ENCODE measurements at regions of chr20 and their contacts with region 1.

Region 1: GRCh38 chr20:41136680-41137613 is at the start of gene PLCG1:
- DNase-seq: peak; percentile 61 to 90 (median 83)
- ATAC-seq: peak; percentile 70
- H3K4me3 ChIP-seq: peak within 1 kb of the TSS; percentile 72 to 81
- H3K4me3 Mint-ChIP-seq: peak within 1 kb of the TSS; percentile 92
- H3K27ac ChIP-seq: peak within 1 kb of the TSS; percentile 60 to 89
- H3K27ac Mint-ChIP-seq: peak within 1 kb of the TSS; percentile 93
- H3K4me1 ChIP-seq: peaks cover 58% of the 10 kb centered on the region
- H3K4me1 Mint-ChIP-seq: peaks cover 63% of the 10 kb centered on the region
- H3K27me3 ChIP-seq: no peaks in the 10 kb centered on the region
- H3K27me3 Mint-ChIP-seq: no peaks in the 10 kb centered on the region
- CTCF ChIP-seq: no peak
- total RNA-seq, gene PLCG1: 335 to 366 TPM

Region 2: GRCh38 chr20:40990542-40991120 is 146.3 kb before region 1 on chr20:
- CTCF ChIA-PET with region 1: interaction called, 11 read pairs
- POLR2A ChIA-PET with region 1: no interaction called
- intact Hi-C with region 1: no loop called
- DNase-seq: peak; percentile 35 to 77 (median 65)
- ATAC-seq: peak; percentile 81
- H3K4me3 ChIP-seq: no peak overlapping the region
- H3K4me3 Mint-ChIP-seq: no peak overlapping the region
- H3K27ac ChIP-seq: no peak overlapping the region
- H3K27ac Mint-ChIP-seq: no peak overlapping the region
- H3K4me1 ChIP-seq: peaks cover 30% of the 10 kb centered on the region
- H3K4me1 Mint-ChIP-seq: peaks cover 36% of the 10 kb centered on the region
- H3K27me3 ChIP-seq: no peaks in the 10 kb centered on the region
- H3K27me3 Mint-ChIP-seq: no peaks in the 10 kb centered on the region
- CTCF ChIP-seq: peak; percentile 74

Region 3: GRCh38 chr20:41149679-41150131 is 12.8 kb after region 1 on chr20:
- CTCF ChIA-PET with region 1: interaction called, 165 read pairs
- POLR2A ChIA-PET with region 1: interaction called, 317 read pairs
- intact Hi-C with region 1: loop called in 1 of 2 experiments (anchors 1 kb)
- DNase-seq: no peak
- ATAC-seq: no peak
- H3K4me3 ChIP-seq: no peak overlapping the region
- H3K4me3 Mint-ChIP-seq: peak overlapping the region; percentile 29
- H3K27ac ChIP-seq: peak overlapping the region in 1 of 2 experiments; percentile 82
- H3K27ac Mint-ChIP-seq: peak overlapping the region; percentile 98
- H3K4me1 ChIP-seq: peaks cover 100% of the 10 kb centered on the region
- H3K4me1 Mint-ChIP-seq: peaks cover 97% of the 10 kb centered on the region
- H3K27me3 ChIP-seq: no peaks in the 10 kb centered on the region
- H3K27me3 Mint-ChIP-seq: no peaks in the 10 kb centered on the region
- CTCF ChIP-seq: no peak

Region 4: DNA sequence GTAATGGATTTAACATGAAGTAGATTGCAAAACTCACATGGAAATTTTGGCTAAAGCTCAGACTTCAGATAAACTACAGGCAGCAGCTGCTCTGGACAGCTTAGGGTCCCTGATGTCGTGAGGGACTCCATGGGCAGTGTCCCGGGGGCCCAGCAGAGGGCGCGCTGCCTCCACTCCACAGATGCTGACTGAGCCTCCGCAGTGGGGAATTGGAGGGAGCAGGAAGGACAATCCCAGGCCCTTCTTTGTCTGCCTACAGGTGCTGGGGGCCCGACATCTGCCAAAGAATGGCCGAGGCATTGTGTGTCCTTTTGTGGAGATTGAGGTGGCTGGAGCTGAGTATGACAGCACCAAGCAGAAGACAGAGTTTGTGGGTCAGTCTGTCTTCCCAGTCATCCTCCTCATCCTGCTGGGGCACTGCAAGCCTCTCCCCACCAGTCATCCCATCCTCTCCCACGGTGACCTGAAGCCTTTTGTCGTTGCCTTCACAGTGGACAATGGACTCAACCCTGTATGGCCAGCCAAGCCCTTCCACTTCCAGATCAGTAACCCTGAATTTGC is 36.3 kb after region 1 on chr20:
- CTCF ChIA-PET with region 1: interaction called, 94 read pairs
- POLR2A ChIA-PET with region 1: interaction called, 9 read pairs
- intact Hi-C with region 1: loop called (anchors 1 to 5 kb)
- DNase-seq: peak; percentile 22 to 83 (median 71)
- ATAC-seq: peak; percentile 93
- H3K4me3 ChIP-seq: no peak overlapping the region
- H3K4me3 Mint-ChIP-seq: no peak overlapping the region
- H3K27ac ChIP-seq: peak overlapping the region in 1 of 2 experiments; percentile 29
- H3K27ac Mint-ChIP-seq: peak overlapping the region; percentile 81
- H3K4me1 ChIP-seq: peaks cover 21% of the 10 kb centered on the region
- H3K4me1 Mint-ChIP-seq: peaks cover 43% of the 10 kb centered on the region
- H3K27me3 ChIP-seq: no peaks in the 10 kb centered on the region
- H3K27me3 Mint-ChIP-seq: no peaks in the 10 kb centered on the region
- CTCF ChIP-seq: peak; percentile 74

Region 5: DNA sequence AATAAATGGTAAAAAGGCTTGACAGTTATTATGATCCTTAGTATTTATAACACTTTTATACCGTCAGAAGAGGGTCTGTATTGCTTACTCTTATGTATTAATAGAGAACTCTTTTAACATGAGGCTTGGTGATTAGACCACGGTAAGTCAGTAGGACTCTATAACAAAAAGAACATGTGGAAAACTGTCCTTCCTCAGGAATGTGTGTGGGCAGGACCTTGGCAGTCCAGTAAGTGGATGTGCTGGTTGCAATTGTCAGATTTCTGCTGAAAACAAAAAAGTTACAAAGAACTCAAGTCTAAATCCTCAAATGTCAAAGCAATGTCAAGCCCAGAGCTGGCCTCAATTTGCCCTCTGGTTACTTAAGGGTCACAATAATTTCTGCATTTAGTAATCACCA is 81.5 kb after region 1 on chr20:
- CTCF ChIA-PET with region 1: interaction called, 38 read pairs
- POLR2A ChIA-PET with region 1: interaction called, 3 read pairs
- intact Hi-C with region 1: no loop called
- DNase-seq: no peak
- ATAC-seq: no peak
- H3K4me3 ChIP-seq: no peak overlapping the region
- H3K4me3 Mint-ChIP-seq: no peak overlapping the region
- H3K27ac ChIP-seq: no peak overlapping the region
- H3K27ac Mint-ChIP-seq: no peak overlapping the region
- H3K4me1 ChIP-seq: no peaks in the 10 kb centered on the region
- H3K4me1 Mint-ChIP-seq: no peaks in the 10 kb centered on the region
- H3K27me3 ChIP-seq: no peaks in the 10 kb centered on the region
- H3K27me3 Mint-ChIP-seq: no peaks in the 10 kb centered on the region
- CTCF ChIP-seq: no peak

Region 6: DNA sequence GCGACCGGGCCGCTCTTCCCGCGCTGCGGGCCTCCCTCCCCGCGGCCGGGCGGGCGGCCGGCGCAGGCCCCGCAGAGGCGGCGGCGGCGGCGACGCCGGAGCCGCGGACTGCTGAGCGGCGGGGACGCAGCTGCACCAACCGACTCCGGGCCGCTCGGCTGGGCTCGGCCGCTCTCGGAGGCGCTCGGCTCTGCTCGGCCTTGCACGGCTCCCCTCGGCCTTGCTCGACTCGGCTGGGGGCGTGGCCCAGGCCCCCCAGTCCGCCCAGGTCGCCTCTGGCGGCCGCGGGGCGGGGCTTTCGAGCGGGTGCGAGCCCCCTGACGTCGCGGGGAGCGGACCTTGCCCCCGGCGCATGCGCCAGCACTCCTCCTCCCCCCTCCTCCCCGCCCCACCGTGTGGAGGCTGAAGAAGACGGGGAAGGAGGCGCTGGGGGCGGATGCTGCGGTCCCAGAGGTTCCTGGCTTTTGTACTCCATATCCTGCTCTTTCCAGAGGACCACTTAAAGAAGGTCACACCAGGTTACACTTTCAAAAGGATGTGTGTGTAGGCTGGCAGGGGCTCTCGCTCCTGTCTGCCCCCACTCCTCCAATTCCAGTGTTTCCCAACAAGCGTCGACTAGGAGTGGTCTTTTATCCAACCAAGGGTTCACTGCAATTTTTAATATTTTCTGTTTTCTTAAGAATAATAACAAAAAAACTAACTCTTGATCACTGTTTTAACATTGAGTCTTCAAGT is 180.8 kb after region 1 on chr20 and contains the start of gene ZHX3:
- CTCF ChIA-PET with region 1: interaction called, 10 read pairs
- POLR2A ChIA-PET with region 1: interaction called, 3 read pairs
- intact Hi-C with region 1: loop called (anchors 1 to 2 kb)
- DNase-seq: peak; percentile 93 to 99 (median 97)
- ATAC-seq: peak; percentile 95
- H3K4me3 ChIP-seq: peak within 1 kb of the TSS; percentile 67 to 85
- H3K4me3 Mint-ChIP-seq: peak within 1 kb of the TSS; percentile 80
- H3K27ac ChIP-seq: peak within 1 kb of the TSS; percentile 47 to 57
- H3K27ac Mint-ChIP-seq: peak within 1 kb of the TSS; percentile 57
- H3K4me1 ChIP-seq: peaks cover 11% of the 10 kb centered on the region
- H3K4me1 Mint-ChIP-seq: peaks cover 28% of the 10 kb centered on the region
- H3K27me3 ChIP-seq: no peaks in the 10 kb centered on the region
- H3K27me3 Mint-ChIP-seq: no peaks in the 10 kb centered on the region
- CTCF ChIP-seq: no peak
- total RNA-seq, gene ZHX3: 4.4 to 4.7 TPM

Region 7: GRCh38 chr20:41693136-41693979 is 556.4 kb after region 1 on chr20:
- CTCF ChIA-PET with region 1: no interaction called
- POLR2A ChIA-PET with region 1: no interaction called
- intact Hi-C with region 1: loop called in 1 of 2 experiments (anchors 5 kb)
- DNase-seq: peak; percentile 60 to 94 (median 80)
- ATAC-seq: peak; percentile 86
- H3K4me3 ChIP-seq: peak overlapping the region; percentile 92 to 97
- H3K4me3 Mint-ChIP-seq: peak overlapping the region; percentile 87
- H3K27ac ChIP-seq: peak overlapping the region; percentile 86 to 91
- H3K27ac Mint-ChIP-seq: peak overlapping the region; percentile 93
- H3K4me1 ChIP-seq: peaks cover 10% of the 10 kb centered on the region
- H3K4me1 Mint-ChIP-seq: peaks cover 18% of the 10 kb centered on the region
- H3K27me3 ChIP-seq: no peaks in the 10 kb centered on the region
- H3K27me3 Mint-ChIP-seq: peaks cover 4% of the 10 kb centered on the region
- CTCF ChIP-seq: peak; percentile 40

Measured in CD8-positive, alpha-beta T cell (primary cell).